ENCODE measurements at regions of chr7 and their contacts with region 1.

Region 1: GRCh38 chr7:151782598-151783448 is 94.1 kb downstream of the PRKAG2 start:
- DNase-seq: peak; percentile 81
- ATAC-seq: peak; percentile 93 to 94

Region 2: DNA sequence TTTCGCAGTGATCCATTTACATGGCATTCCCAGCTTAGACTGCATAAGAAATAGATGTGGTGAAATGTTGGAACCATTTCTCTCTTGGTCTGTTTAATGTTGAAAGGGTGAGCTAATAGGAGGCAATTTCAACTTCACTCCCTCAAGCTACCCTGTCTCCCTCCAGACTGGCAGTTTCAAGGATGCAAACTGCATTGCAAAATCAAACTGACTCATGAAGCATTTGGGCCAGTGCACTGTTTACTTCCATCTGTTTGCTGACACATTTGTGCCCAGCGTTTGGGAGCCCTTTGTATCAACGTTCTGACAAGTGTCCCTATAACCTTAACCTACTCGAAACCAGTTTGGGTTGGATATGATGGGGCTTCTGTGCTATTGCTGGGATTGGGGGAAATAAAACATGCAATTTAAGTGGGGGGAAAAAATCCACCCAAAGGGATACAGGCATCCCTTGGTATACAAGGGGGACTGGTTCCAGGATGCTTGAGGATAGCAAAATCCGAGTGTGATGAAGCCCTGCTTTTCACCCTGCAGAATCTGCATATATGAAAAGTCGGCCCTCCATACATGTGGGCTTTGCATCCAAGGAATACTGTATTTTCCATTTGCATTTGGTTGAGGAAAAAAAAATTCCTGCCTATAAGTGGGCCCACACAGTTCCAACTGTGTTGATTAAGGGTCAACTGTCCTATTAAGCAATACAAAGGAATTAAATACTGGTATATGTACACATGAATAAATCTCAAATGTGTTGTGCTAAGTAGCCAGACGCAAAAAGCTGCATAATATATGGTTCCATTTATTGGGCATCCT is 278.7 kb before region 1 on chr7:
- intact Hi-C with region 1: no loop called
- DNase-seq: no peak
- ATAC-seq: peak; percentile 80 to 92

Region 3: DNA sequence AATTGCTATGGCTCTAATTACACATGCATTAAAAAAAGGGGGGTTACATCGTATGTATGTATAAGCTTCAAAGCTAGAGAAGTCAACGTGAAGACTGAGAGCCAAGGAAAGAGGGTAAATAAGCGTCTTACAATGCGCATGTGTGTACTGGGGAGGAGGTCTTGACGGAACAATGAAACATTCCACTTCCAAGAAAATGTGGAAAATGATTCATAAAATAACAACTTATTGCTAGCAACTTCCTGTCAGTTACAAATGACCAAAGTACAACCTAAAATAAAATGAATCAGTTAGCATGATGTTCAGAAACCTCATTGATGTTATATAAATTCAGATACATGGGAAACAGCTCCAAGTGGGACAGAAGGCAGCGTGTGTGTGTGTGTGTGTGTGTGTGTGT is 159.1 kb before region 1 on chr7:
- intact Hi-C with region 1: no loop called
- DNase-seq: no peak
- ATAC-seq: no peak

Region 4: GRCh38 chr7:151795168-151795811 is 12.5 kb after region 1 on chr7:
- intact Hi-C with region 1: no loop called
- DNase-seq: no peak
- ATAC-seq: no peak

Region 5: DNA sequence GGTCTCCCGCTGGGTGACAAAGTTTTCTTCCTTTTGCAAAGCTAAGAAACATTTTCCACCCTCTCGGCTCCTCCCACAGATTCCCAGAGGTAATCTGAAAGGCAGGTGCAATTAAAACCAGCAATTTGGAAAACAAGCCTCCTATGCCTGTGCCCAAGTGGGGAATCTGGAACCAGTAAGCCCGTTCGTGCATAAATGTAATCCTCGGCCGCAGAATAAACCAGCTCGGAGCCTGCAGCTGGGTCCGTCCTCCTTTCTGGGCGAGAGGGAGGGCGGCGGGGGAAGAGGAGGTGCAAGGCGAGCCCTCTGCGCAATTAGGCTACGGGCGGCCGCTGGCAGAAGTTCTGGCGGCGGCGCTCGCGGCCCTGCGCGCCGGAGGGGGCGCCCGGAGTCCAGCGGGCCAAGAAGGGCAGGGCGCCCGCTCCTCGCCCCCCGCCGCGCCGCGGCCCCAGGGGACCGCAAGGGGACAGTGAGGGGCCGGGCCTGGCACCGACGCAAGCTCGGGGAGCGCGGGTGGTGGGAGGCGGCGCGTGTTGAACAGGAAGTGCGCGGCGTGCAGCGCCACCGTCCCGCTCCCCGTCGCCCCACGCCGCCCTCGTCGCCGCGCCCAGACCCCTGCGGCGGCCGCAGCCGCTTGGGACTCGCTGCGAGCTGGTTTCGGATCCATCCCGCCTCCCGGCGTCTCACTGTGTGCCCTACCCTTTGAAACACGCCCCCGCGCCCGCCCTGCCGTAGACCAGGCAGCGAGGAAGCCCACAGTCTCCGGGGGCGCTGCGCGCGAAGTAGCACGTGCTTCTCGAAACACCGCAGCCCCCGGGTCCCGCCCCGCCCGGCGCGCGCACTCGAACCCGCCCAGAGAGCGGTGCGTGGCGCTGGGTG is 94.3 kb after region 1 on chr7 and contains the start of gene PRKAG2:
- intact Hi-C with region 1: loop called in 1 of 2 experiments (anchors 10 kb)
- DNase-seq: peak; percentile 77
- ATAC-seq: peak; percentile 57 to 61
- total RNA-seq, gene PRKAG2: 141 to 253 TPM

Region 6: DNA sequence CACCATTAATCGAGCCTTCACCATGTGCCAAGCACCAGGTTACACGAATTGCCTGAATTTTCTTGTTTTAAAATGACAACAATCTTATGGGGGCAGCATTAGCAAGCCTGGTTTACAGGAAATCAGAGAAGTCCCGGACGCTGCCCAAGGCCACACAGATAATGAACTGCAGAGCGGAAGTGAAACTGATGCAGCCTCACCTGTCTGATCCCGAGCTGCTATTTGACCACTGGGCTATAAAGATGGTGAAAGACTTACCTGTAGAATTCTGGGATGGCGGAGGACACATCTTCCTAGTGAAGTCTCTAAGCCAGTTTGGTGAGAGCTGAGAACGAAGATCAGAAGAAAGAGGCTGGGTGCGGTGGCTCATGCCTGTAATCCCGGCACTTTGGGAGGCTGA is 151.8 kb after region 1 on chr7:
- intact Hi-C with region 1: loop called in 1 of 2 experiments (anchors 2 kb)
- DNase-seq: no peak
- ATAC-seq: no peak

Region 7: DNA sequence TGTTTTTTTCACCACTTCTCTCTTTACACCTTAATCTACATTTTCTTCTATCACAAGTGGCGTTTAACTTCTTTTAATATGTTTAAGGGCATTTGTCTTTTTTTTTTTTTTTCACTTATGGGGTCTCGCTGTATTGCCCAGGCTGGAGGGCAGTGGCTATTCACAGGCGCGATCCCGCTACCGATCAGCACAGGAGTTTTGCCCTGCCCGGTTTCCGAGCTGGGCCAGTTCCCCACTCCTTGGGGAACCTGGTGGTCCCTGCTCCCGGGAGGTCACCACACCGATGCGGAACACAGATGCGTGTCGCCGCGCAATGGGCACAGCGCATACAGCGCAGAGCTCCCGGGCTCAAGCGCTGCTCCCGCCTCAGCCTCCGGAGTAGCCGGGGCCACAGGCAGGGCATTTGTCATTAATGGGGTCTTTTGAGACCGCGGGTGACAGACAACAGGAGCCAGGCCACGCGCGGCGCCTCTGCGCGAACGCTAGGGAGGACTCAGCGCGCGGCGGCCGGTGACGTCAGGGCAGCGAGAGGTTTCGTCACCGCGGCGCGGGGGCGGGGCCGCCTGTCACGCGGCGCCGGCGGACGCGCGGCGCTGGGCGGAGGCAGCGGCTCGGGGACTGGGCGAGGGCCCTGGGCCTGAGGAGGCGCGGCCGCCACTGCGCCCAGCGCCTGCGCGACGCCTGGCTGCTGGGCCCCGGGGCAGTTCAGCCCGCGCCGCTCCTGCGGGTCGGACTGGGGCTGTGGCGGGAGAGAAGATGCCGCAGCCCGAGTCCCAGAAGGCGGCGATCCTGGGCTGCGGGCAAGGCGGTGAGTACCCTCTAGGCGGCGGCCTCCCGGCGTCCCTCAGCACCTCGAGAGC is 242.5 kb after region 1 on chr7 and contains the start of gene GALNT11:
- intact Hi-C with region 1: loop called in 1 of 2 experiments (anchors 5 kb)
- DNase-seq: peak; percentile 91
- ATAC-seq: peak; percentile 99
- total RNA-seq, gene GALNT11: 24.3 to 24.5 TPM

Measured in left cardiac atrium (tissue), 4 donors.